ENCODE measurements at regions of chr3 and their contacts with region 1.

Region 1: GRCh38 chr3:53347261-53348064 is at the start of gene DCP1A:
- DNase-seq: peak; percentile 96 to 97 (median 96)
- ATAC-seq: peak; percentile 99
- H3K4me3 ChIP-seq: peak within 1 kb of the TSS; percentile 63 to 96 (median 88)
- H3K27ac ChIP-seq: peak within 1 kb of the TSS; percentile 80 to 98 (median 93)
- H3K4me1 ChIP-seq: peaks cover 2 to 39% (median 31%) of the 10 kb centered on the region in 12 donors
- H3K27me3 ChIP-seq: no peaks in the 10 kb centered on the region
- CTCF ChIP-seq: peak in 2 of 12 donors; percentile 7 to 8
- POLR2A ChIP-seq: peak in 1 of 2 donors; percentile 81
- total RNA-seq, gene DCP1A: 13.2 to 23.7 (median 16.9) TPM

Region 2: GRCh38 chr3:53122933-53123305 is 224.5 kb before region 1 on chr3:
- intact Hi-C with region 1: loop called in 1 of 10 experiments (anchors 10 kb)
- DNase-seq: no peak
- ATAC-seq: peak in 3 of 4 donors; percentile 29 to 36 (median 29)
- H3K4me3 ChIP-seq: no peak overlapping the region
- H3K27ac ChIP-seq: peak overlapping the region in 9 of 12 donors; percentile 28 to 58 (median 52)
- H3K4me1 ChIP-seq: peaks cover 0 to 31% (median 10%) of the 10 kb centered on the region in 12 donors
- H3K27me3 ChIP-seq: no peaks in the 10 kb centered on the region
- CTCF ChIP-seq: no peak
- POLR2A ChIP-seq: no peak

Region 3: GRCh38 chr3:53555068-53555588 is 207.7 kb after region 1 on chr3:
- intact Hi-C with region 1: no loop called
- DNase-seq: no peak
- ATAC-seq: no peak
- H3K4me3 ChIP-seq: no peak overlapping the region
- H3K27ac ChIP-seq: no peak overlapping the region
- H3K4me1 ChIP-seq: no peaks in the 10 kb centered on the region
- H3K27me3 ChIP-seq: no peaks in the 10 kb centered on the region
- CTCF ChIP-seq: no peak
- POLR2A ChIP-seq: no peak

Region 4: DNA sequence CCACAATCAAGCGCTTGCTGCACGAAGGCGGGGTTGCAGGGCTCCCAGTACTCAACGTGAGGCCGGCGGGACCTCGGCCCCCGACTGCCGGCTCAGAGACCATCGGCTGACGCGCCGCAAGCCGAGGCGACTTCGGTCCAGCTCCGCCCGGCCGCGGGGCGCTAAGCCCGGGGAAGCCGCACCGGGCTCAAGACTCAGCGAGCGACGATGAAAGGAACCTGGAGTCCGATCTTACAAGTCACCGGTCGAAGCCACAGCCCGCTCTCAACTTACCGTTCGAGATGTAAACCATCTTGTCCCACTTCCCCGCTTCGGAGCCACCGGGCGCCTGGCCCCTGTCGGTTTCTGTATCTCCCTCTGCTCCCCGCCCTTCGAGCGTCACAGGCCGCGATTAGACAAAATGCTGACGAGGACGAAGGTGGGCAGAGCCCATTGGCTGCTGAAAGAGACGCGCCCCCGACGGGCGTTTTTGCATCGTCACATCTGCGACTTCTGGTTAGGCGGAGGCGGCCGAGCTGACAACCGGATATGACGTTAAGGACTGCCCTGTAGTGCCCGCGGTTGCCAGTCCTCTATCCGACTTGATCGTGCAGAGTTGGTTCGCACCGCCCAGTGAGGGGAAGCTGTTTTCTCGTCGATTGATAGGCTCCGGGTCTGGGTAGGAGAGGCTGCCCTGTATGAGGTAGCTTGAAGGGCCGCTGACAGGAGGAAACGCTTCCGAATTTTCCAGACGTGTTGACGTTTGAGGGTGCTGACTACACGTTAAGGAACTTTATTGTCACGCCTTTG is 544.2 kb after region 1 on chr3 and contains the start of gene SELENOK:
- intact Hi-C with region 1: loop called in 2 of 10 experiments (anchors 5 kb)
- DNase-seq: peak; percentile 98 to 99 (median 99)
- ATAC-seq: peak; percentile 98 to 99 (median 98)
- H3K4me3 ChIP-seq: peak within 1 kb of the TSS; percentile 70 to 97 (median 86)
- H3K27ac ChIP-seq: peak within 1 kb of the TSS; percentile 81 to 99 (median 92)
- H3K4me1 ChIP-seq: peaks cover 0 to 36% (median 26%) of the 10 kb centered on the region in 12 donors
- H3K27me3 ChIP-seq: peaks cover 0 to 18% (median 0%) of the 10 kb centered on the region in 9 donors
- CTCF ChIP-seq: no peak
- POLR2A ChIP-seq: peak; percentile 95
- total RNA-seq, gene SELENOK: 65.7 to 173 (median 81.5) TPM

Measured in heart left ventricle (tissue), 16 donors.